ENCODE measurements at regions of chr10 and their contacts with region 1.

Region 1: DNA sequence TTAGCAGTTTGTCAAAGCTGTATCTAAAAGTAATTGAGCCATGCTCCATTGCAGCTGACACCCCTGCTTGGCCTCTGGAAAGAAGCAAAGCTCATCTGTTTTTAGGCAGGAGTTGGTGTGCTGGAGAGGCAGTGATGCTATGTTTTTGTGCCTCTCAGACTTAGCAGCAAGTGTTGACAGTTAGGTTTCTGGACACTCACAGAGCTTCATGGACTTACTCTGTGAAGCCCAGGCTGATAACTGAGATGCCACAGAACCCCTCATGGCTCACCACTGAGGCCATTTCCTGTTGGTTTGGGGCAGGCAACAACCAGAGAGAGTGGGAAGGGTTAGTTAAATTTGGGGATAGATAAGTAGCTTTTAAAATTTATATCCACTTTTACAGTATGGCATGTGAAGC is 59.8 kb downstream of the BTAF1 start:
- DNase-seq: no peak
- H3K4me3 Mint-ChIP-seq: no peak overlapping the region
- H3K27ac Mint-ChIP-seq: no peak overlapping the region
- H3K4me1 Mint-ChIP-seq: peaks cover 40% of the 10 kb centered on the region
- H3K27me3 Mint-ChIP-seq: no peaks in the 10 kb centered on the region

Region 2: DNA sequence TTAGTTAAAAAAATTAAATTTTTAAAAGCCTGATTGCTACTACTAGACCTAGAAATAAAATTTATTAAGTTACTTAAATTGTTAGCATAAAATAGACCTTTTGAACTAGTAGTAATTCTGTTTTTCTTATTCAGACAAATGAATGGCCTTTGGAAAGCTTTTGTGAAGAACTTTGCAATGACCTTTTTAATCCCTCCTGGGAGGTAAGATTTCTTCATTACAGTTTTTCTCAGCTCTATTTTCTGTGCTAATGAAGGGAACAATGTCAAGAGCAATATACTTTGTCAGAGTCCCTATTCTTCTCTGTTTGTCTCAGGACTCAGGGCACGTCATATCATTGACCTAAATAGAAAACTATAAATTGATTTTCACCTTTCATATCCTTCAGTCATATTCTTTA is 26.3 kb before region 1 on chr10:
- intact Hi-C with region 1: loop called (anchors 2 kb)
- DNase-seq: no peak
- H3K4me3 Mint-ChIP-seq: no peak overlapping the region
- H3K27ac Mint-ChIP-seq: no peak overlapping the region
- H3K4me1 Mint-ChIP-seq: peaks cover 8% of the 10 kb centered on the region
- H3K27me3 Mint-ChIP-seq: no peaks in the 10 kb centered on the region

Region 3: GRCh38 chr10:92091965-92092364 is 108.5 kb after region 1 on chr10:
- intact Hi-C with region 1: no loop called
- DNase-seq: no peak
- H3K4me3 Mint-ChIP-seq: no peak overlapping the region
- H3K27ac Mint-ChIP-seq: no peak overlapping the region
- H3K4me1 Mint-ChIP-seq: peaks cover 8% of the 10 kb centered on the region
- H3K27me3 Mint-ChIP-seq: no peaks in the 10 kb centered on the region

Region 4: GRCh38 chr10:92366412-92367021 is 383.1 kb after region 1 on chr10:
- intact Hi-C with region 1: no loop called
- DNase-seq: no peak
- H3K4me3 Mint-ChIP-seq: no peak overlapping the region
- H3K27ac Mint-ChIP-seq: no peak overlapping the region
- H3K4me1 Mint-ChIP-seq: no peaks in the 10 kb centered on the region
- H3K27me3 Mint-ChIP-seq: peaks cover 14% of the 10 kb centered on the region

Measured in activated T-helper 1 cell treated with anti-CD3 and anti-CD28 coated beads, Interleukin-12 subunit alpha, Interleukin-12 subunit beta, Interleukin-2, Interleukin-4 antibody, amounts not matched to agents 30 ng/mL and 10 ng/mL and 1 ng/mL, durations not matched to agents 14 hours and 24 hours and 36 hours (primary cell).